B cell (primary cell): ENCODE measurements at regions of chr7 and their contacts with region 1.

Region 1: DNA sequence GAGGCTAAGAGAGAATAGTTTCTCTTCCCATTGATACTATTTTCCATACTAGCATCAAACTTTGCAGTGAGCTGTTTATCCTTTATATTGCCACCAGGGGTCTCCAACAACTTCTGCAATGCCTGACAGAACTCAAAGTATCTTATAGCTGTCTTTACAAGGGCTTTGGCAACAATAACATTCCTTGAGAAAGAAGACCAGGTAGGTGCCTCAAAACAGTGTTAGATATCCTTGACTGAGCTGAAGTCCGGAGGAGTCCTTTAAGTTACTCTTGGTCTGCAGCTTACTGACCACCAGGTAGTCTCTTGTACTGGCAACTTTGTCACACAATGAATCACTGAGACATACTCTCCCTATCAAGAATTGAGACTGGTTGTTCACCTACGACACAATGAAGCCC is 30.0 kb upstream of the TES start:
- DNase-seq: peak; percentile 73
- ATAC-seq: peak; percentile 80
- H3K4me3 ChIP-seq: no peak overlapping the region
- H3K4me3 Mint-ChIP-seq: no peak overlapping the region
- H3K27ac ChIP-seq: no peak overlapping the region
- H3K27ac Mint-ChIP-seq: no peak overlapping the region
- H3K4me1 ChIP-seq: no peaks in the 10 kb centered on the region
- H3K4me1 Mint-ChIP-seq: no peaks in the 10 kb centered on the region
- H3K27me3 ChIP-seq: no peaks in the 10 kb centered on the region
- H3K27me3 Mint-ChIP-seq: no peaks in the 10 kb centered on the region
- CTCF ChIP-seq: peak; percentile 85

Region 2: DNA sequence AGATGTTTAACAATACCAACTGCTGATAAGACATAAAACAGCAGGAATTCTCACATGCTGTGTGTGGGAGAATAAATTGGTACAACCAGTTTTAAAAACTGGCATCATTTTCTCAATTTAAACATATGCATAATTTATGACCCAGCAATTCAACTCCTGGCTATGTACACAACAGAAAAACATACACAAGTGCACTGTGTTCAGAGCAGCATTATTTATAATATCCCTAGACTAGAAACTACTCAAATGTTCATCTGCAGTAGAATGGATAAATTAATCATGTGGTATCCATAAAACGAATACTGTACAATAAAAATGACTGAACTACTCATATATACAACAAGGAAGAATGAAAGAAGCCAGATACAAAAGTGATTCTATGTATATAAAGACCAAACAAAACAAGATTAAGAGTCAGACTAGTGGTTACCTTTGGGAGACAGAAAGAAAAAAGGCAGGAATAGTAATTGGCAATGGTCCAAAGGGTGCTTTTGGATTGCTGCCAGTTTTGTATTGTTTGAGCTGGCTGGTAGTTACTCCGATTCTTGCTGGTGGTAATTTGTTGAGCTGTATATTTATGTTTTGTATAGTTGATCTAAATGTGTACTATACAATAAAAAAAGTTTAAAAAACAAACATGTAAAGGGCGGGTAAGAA is 455.8 kb before region 1 on chr7:
- CTCF ChIA-PET with region 1: no interaction called
- POLR2A ChIA-PET with region 1: no interaction called
- intact Hi-C with region 1: no loop called
- DNase-seq: no peak
- ATAC-seq: no peak
- H3K4me3 ChIP-seq: no peak overlapping the region
- H3K4me3 Mint-ChIP-seq: no peak overlapping the region
- H3K27ac ChIP-seq: no peak overlapping the region
- H3K27ac Mint-ChIP-seq: no peak overlapping the region
- H3K4me1 ChIP-seq: no peaks in the 10 kb centered on the region
- H3K4me1 Mint-ChIP-seq: no peaks in the 10 kb centered on the region
- H3K27me3 ChIP-seq: no peaks in the 10 kb centered on the region
- H3K27me3 Mint-ChIP-seq: no peaks in the 10 kb centered on the region
- CTCF ChIP-seq: no peak

Region 3: GRCh38 chr7:116165717-116166116 is 14.6 kb before region 1 on chr7:
- CTCF ChIA-PET with region 1: interaction called, 25 read pairs
- POLR2A ChIA-PET with region 1: no interaction called
- intact Hi-C with region 1: no loop called
- DNase-seq: peak; percentile 81
- ATAC-seq: peak; percentile 84
- H3K4me3 ChIP-seq: peak overlapping the region in 1 of 5 experiments; percentile 49
- H3K4me3 Mint-ChIP-seq: peak overlapping the region; percentile 71
- H3K27ac ChIP-seq: peak overlapping the region; percentile 27 to 42
- H3K27ac Mint-ChIP-seq: peak overlapping the region; percentile 90
- H3K4me1 ChIP-seq: peaks cover 44 to 45% of the 10 kb centered on the region in 2 donors
- H3K4me1 Mint-ChIP-seq: peaks cover 60% of the 10 kb centered on the region
- H3K27me3 ChIP-seq: no peaks in the 10 kb centered on the region
- H3K27me3 Mint-ChIP-seq: no peaks in the 10 kb centered on the region
- CTCF ChIP-seq: no peak

Region 4: DNA sequence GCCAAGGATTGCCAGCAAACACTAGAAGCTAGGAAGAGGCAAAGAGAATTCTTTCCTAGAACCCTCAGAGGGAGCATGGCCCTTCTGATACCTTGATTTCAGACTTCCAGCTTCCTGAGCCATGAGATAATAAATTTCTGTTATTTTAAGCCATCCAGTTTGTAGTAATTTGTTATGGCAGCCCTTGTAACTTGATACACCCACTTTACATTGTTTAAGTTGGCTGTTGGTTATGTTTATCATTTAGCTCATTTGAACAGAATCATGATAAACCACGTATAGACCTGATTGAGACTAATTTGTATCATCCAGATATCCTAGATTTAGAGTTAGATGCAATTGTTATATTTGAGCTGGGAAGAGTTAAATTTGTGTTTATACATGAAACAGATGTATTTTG is 20.7 kb after region 1 on chr7:
- CTCF ChIA-PET with region 1: interaction called, 21 read pairs
- POLR2A ChIA-PET with region 1: no interaction called
- intact Hi-C with region 1: no loop called
- DNase-seq: no peak
- ATAC-seq: no peak
- H3K4me3 ChIP-seq: no peak overlapping the region
- H3K4me3 Mint-ChIP-seq: no peak overlapping the region
- H3K27ac ChIP-seq: no peak overlapping the region
- H3K27ac Mint-ChIP-seq: no peak overlapping the region
- H3K4me1 ChIP-seq: no peaks in the 10 kb centered on the region
- H3K4me1 Mint-ChIP-seq: no peaks in the 10 kb centered on the region
- H3K27me3 ChIP-seq: no peaks in the 10 kb centered on the region
- H3K27me3 Mint-ChIP-seq: no peaks in the 10 kb centered on the region
- CTCF ChIP-seq: no peak

Region 5: GRCh38 chr7:116218051-116218645 is 37.8 kb after region 1 on chr7:
- CTCF ChIA-PET with region 1: interaction called, 25 read pairs
- POLR2A ChIA-PET with region 1: no interaction called
- intact Hi-C with region 1: no loop called
- DNase-seq: no peak
- ATAC-seq: no peak
- H3K4me3 ChIP-seq: no peak overlapping the region
- H3K4me3 Mint-ChIP-seq: no peak overlapping the region
- H3K27ac ChIP-seq: no peak overlapping the region
- H3K27ac Mint-ChIP-seq: no peak overlapping the region
- H3K4me1 ChIP-seq: peaks cover 44 to 62% of the 10 kb centered on the region in 2 donors
- H3K4me1 Mint-ChIP-seq: peaks cover 83% of the 10 kb centered on the region
- H3K27me3 ChIP-seq: no peaks in the 10 kb centered on the region
- H3K27me3 Mint-ChIP-seq: no peaks in the 10 kb centered on the region
- CTCF ChIP-seq: no peak

Region 6: GRCh38 chr7:116236020-116236630 is 55.8 kb after region 1 on chr7:
- CTCF ChIA-PET with region 1: interaction called, 497 read pairs
- POLR2A ChIA-PET with region 1: no interaction called
- intact Hi-C with region 1: loop called (anchors 1 kb)
- DNase-seq: peak; percentile 71
- ATAC-seq: peak; percentile 80
- H3K4me3 ChIP-seq: no peak overlapping the region
- H3K4me3 Mint-ChIP-seq: no peak overlapping the region
- H3K27ac ChIP-seq: no peak overlapping the region
- H3K27ac Mint-ChIP-seq: no peak overlapping the region
- H3K4me1 ChIP-seq: peaks cover 0 to 8% of the 10 kb centered on the region in 2 donors
- H3K4me1 Mint-ChIP-seq: peaks cover 32% of the 10 kb centered on the region
- H3K27me3 ChIP-seq: no peaks in the 10 kb centered on the region
- H3K27me3 Mint-ChIP-seq: no peaks in the 10 kb centered on the region
- CTCF ChIP-seq: peak; percentile 85

Region 7: DNA sequence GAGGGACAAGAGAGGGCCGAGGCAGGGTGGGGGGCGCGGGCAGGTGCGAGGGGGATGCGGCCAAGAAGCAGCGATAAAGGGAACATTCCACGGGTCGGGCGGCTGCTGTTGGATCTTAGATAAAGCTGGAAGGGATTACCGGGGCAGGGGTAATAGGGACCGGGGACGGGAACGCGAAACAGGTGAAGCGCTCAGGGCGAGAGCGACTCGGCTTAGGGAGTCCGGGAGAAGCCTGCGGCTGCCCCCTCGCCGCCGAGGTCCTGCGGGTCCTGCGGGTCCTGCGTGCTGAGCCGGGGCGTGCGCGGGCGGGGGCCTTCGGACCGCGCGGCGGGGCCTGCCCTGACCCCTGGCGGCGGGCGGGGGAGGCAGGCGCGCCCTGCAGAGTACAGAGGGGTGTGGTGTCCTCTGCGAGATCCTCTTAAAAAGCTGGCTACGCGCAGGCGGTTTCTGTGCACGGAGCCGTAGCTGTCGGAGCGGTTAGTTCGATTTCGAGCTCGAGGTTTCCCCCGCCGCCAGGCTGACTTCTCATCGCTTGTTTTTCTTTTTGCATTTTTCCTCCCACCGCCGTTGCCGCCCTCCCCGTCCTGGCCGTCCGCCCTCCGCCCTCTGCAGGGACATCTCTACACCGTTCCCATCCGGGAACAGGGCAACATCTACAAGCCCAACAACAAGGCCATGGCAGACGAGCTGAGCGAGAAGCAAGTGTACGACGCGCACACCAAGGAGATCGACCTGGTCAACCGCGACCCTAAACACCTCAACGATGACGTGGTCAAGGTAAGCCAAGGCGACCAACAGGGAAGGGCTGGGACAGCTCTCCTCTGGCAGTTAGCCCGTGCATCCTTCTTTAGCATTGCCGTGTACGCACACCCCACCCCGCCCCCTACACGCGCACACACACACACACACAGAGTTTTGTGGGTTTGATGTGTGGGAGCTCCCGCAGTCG is 345.9 kb after region 1 on chr7:
- CTCF ChIA-PET with region 1: interaction called, 11 read pairs
- POLR2A ChIA-PET with region 1: no interaction called
- intact Hi-C with region 1: no loop called
- DNase-seq: peak; percentile 83
- ATAC-seq: peak; percentile 92
- H3K4me3 ChIP-seq: peak overlapping the region; percentile 3 to 84 (median 73)
- H3K4me3 Mint-ChIP-seq: peak overlapping the region; percentile 96
- H3K27ac ChIP-seq: no peak overlapping the region
- H3K27ac Mint-ChIP-seq: peak overlapping the region; percentile 65
- H3K4me1 ChIP-seq: peaks cover 12 to 27% of the 10 kb centered on the region in 2 donors
- H3K4me1 Mint-ChIP-seq: peaks cover 26% of the 10 kb centered on the region
- H3K27me3 ChIP-seq: peaks cover 0 to 42% (median 28%) of the 10 kb centered on the region in 4 experiments
- H3K27me3 Mint-ChIP-seq: peaks cover 46% of the 10 kb centered on the region
- CTCF ChIP-seq: peak; percentile 87